HepG2 (cell line): ENCODE measurements at regions of chr2 and their contacts with region 1.

Region 1: GRCh38 chr2:69082430-69082997 is 69.5 kb downstream of the ANTXR1 start:
- DNase-seq: peak; percentile 92
- ATAC-seq: peak; percentile 86
- H3K4me3 ChIP-seq: peak overlapping the region in 2 of 3 experiments; percentile 1 to 11; a peak in 1 of 6 replicates
- H3K27ac ChIP-seq: peak overlapping the region; percentile 49
- H3K4me1 ChIP-seq: peaks cover 37% of the 10 kb centered on the region
- H3K27me3 ChIP-seq: no peaks in the 10 kb centered on the region
- CTCF ChIP-seq: no peak
- EP300 ChIP-seq: peak in 1 of 2 experiments; percentile 94; a peak in 3 of 4 replicates
- POLR2A ChIP-seq: no peak
- RAD21 ChIP-seq: no peak

Region 2: DNA sequence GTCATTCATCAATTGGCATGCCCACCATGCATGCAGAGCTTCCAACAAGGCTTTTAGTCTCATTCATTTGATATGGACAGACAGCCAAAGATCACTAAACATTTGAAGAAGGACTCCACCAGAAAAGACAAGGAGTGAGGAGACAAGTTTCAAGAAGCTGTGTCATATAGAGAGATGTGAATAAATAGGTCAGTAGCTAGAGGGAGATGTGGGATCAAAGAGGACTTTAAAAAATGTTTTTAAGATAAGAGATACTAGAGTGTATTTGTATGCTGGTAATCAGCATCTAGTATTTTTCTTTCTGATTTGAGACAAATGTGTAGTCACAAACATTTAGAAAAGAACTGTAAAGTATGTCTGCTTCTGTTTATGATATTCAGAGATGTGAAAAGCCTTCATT is 21.0 kb before region 1 on chr2:
- CTCF ChIA-PET with region 1: no interaction called
- POLR2A ChIA-PET with region 1: interaction called, 11 read pairs
- in situ Hi-C with region 1: no loop called
- intact Hi-C with region 1: no loop called
- DNase-seq: no peak
- ATAC-seq: no peak
- H3K4me3 ChIP-seq: no peak overlapping the region; a peak in 1 of 6 replicates
- H3K27ac ChIP-seq: peak overlapping the region; percentile 48
- H3K4me1 ChIP-seq: peaks cover 35% of the 10 kb centered on the region
- H3K27me3 ChIP-seq: no peaks in the 10 kb centered on the region
- CTCF ChIP-seq: no peak
- EP300 ChIP-seq: no peak
- POLR2A ChIP-seq: no peak
- RAD21 ChIP-seq: no peak

Region 3: DNA sequence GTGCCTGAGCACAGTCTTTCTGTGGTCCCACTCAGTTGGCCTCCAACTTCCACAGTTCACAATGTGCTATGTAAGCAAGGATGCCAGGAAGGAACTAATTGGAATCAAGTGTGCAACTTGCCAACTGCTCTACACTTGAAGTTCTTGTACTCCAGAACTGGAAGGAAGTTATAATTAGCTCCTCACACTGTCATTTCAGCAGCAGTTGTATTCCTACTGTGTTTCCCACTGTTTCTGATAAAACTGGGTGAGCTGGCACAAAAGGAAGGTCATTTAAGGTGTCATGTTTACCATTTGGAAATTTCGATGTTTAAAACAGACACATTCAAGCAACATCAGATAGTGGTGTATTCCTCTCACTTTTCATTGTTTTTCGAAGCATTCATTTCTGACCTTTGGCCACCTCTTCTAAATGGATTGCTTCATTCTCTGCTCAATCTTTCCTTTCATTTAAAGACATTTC is 14.7 kb after region 1 on chr2:
- CTCF ChIA-PET with region 1: no interaction called
- POLR2A ChIA-PET with region 1: interaction called, 11 read pairs
- in situ Hi-C with region 1: no loop called
- intact Hi-C with region 1: no loop called
- DNase-seq: peak; percentile 86
- ATAC-seq: peak; percentile 85
- H3K4me3 ChIP-seq: no peak overlapping the region
- H3K27ac ChIP-seq: peak overlapping the region; percentile 54
- H3K4me1 ChIP-seq: peaks cover 20% of the 10 kb centered on the region
- H3K27me3 ChIP-seq: no peaks in the 10 kb centered on the region
- CTCF ChIP-seq: no peak
- EP300 ChIP-seq: peak in 1 of 2 experiments; percentile 81; a peak in 2 of 4 replicates
- POLR2A ChIP-seq: no peak
- RAD21 ChIP-seq: no peak

Region 4: GRCh38 chr2:69109255-69109654 is 26.7 kb after region 1 on chr2:
- CTCF ChIA-PET with region 1: no interaction called
- POLR2A ChIA-PET with region 1: no interaction called
- in situ Hi-C with region 1: no loop called
- intact Hi-C with region 1: no loop called
- DNase-seq: no peak
- ATAC-seq: no peak
- H3K4me3 ChIP-seq: no peak overlapping the region
- H3K27ac ChIP-seq: no peak overlapping the region
- H3K4me1 ChIP-seq: peaks cover 13% of the 10 kb centered on the region
- H3K27me3 ChIP-seq: no peaks in the 10 kb centered on the region
- CTCF ChIP-seq: no peak
- EP300 ChIP-seq: no peak
- POLR2A ChIP-seq: no peak
- RAD21 ChIP-seq: no peak